ENCODE measurements at regions of chr7 and their contacts with region 1.

Region 1: DNA sequence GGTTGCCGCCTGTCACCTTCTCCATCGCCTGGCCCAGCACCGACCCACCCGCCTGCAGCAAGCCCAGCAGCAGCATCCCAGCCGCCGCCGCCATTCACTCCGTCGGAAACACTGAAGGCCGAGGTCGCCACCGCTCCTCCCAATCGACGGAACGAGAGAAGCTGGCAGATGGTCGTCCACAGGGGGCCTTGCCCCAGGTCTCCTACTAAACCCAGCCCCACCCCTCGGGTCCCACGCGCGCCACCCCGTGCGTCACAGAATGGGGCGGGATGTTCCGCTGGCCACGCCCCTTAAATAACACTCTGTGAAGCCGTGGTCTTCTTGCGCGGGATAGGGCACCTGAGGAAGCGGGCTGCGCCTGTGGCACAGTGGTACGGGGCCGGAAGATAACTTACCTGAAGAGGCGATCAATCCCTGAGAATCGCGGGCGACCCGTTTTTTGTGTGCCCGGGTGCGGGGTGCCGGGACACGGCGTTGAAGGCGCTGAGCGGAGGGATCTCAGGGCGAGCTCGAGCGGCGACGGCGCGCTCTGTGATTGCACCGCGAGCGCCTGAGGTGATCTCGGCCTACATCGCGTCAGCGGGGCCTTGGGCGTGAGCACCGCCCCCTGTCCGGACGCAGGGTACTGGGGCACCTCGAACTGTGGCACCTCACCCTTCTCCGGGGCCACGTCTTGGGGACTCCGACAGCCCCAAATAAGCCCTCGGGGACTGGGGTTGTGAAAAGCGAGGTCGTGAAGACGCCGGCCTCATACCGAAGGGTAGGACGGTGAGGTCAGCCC is at the start of gene CYP51A1:
- H3K4me3 Mint-ChIP-seq: peak within 1 kb of the TSS; percentile 98
- H3K27ac Mint-ChIP-seq: peak within 1 kb of the TSS; percentile 99
- H3K4me1 Mint-ChIP-seq: peaks cover 34% of the 10 kb centered on the region
- H3K27me3 Mint-ChIP-seq: peaks cover 7% of the 10 kb centered on the region

Region 2: GRCh38 chr7:92178927-92179924 is 44.8 kb after region 1 on chr7 and contains the start of gene LRRD1:
- intact Hi-C with region 1: loop called (anchors 1 kb)
- H3K4me3 Mint-ChIP-seq: peak within 1 kb of the TSS; percentile 83
- H3K27ac Mint-ChIP-seq: peak within 1 kb of the TSS; percentile 75
- H3K4me1 Mint-ChIP-seq: peaks cover 14% of the 10 kb centered on the region
- H3K27me3 Mint-ChIP-seq: peaks cover 19% of the 10 kb centered on the region

Region 3: DNA sequence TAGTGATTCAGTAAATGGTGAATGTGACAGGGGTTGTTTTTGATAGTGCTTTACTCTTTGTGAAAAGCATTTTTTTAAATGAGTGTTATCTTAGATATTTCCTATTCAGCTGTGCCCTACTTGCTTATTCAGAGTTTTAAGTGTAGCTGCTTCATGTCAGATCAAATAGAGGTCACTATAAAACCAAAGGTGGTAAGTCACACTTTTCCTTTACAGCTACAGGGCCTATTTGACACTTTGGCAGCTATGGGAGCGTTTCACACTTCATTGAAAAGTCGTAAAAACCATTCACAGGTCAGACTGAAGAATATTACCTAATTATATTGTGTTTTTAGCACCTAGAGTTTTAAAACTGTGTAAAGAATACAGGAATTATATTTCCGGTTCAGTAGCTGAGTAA is 178.6 kb after region 1 on chr7:
- intact Hi-C with region 1: no loop called
- H3K4me3 Mint-ChIP-seq: no peak overlapping the region
- H3K27ac Mint-ChIP-seq: no peak overlapping the region
- H3K4me1 Mint-ChIP-seq: no peaks in the 10 kb centered on the region
- H3K27me3 Mint-ChIP-seq: no peaks in the 10 kb centered on the region

Region 4: DNA sequence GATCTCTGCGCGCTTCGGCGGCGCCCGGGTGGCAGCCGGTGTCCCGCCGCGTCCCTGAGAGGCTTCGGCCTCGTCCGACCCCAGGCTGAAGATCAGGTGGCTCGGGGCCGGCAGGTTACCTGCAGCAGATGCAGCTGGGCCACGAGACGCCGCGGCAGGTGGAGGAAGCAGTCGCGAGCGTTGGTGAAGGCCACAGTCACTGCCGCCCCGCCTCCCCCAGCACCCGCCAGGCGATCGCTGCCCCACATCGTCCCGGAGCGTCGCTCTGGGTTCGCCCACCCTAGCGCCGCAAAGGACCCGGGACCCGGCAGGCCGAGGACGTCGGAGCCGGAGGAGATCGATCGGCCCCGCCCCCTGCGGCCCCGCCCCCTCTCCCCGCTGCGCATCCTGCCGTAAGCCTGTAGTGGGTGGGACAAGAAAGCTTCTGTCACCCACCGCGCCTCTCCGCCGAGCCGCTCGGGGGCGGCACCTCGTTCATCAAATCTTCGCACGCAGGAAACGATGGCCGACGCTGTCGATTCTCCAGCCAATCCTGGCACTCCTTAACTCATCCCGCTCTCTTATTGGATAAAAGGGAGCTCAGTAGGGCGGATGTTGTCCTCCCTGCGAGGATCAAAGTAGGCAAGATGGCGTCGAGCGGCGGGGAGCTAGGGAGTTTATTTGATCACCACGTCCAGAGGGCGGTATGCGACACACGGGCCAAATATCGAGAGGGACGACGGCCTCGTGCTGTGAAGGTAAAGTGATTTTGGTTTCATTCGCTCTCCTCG is 393.9 kb after region 1 on chr7 and contains the starts of genes PEX1 and RBM48:
- intact Hi-C with region 1: loop called (anchors 2 kb)
- H3K4me3 Mint-ChIP-seq: peak within 1 kb of the TSS; percentile 88
- H3K27ac Mint-ChIP-seq: peak within 1 kb of the TSS; percentile 88
- H3K4me1 Mint-ChIP-seq: peaks cover 20% of the 10 kb centered on the region
- H3K27me3 Mint-ChIP-seq: no peaks in the 10 kb centered on the region

Measured in dendritic cell treated with granulocyte-macrophage colony-stimulating factor and Interleukin-4, amounts not matched to agents 40 ng/mL and 50 ng/mL, for 4 days (primary cell).